ENCODE measurements at regions of chr5 and their contacts with region 1.

Region 1: DNA sequence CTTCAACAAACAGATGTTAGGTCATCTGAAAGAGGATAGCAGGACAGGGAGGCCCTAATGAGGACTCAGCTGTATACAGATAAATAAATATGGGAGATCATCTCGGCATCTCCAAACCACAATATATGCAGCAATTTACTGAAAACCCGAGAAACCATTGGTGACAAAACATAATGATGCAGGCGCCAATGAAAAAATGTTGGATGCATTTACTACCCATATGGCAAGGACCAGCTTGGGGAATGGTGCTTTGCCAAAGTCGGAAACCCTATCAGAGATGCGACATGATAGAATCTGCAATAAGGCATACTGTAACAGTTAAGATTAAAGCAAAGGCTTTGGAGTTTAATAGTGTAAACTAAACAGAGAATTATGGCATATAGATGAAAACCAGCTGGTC is 92.0 kb downstream of the SNCAIP start:
- DNase-seq: no peak
- CTCF ChIP-seq: no peak

Region 2: GRCh38 chr5:122415030-122415800 is 11.2 kb after region 1 on chr5:
- CTCF ChIA-PET with region 1: interaction called, 31 read pairs
- POLR2A ChIA-PET with region 1: no interaction called
- DNase-seq: peak; percentile 47
- CTCF ChIP-seq: peak; percentile 90

Measured in GM10248 (cell line).